Activated CD8-positive, alpha-beta T cell treated with anti-CD3 and anti-CD28 coated beads for 36 hours (primary cell): ENCODE measurements at regions of chr2 and their contacts with region 1.

Region 1: DNA sequence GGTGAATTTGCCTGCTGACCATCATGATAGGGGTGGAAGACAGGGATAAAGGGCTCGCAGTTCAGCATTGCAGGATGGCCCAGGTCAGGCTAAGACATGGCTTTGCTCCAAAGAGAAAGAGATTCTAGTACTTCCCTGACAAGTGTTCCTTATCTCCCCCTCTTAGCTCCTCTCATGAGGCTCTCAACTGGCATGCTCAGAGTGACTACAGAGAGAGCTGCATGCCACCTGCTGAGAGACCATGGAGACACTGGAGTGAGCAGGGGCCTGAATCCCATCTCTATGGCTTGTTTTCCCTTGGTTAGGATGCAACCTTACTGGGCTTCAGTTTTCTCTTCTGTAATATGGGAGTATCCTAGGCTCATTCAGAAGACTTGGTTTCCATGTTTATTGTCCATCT is 94.3 kb downstream of the ARHGAP15 start:
- DNase-seq: no peak
- ATAC-seq: no peak
- H3K4me3 Mint-ChIP-seq: no peak overlapping the region
- H3K27ac Mint-ChIP-seq: peak overlapping the region; percentile 59
- H3K4me1 Mint-ChIP-seq: peaks cover 51% of the 10 kb centered on the region
- H3K27me3 Mint-ChIP-seq: no peaks in the 10 kb centered on the region
- CTCF ChIP-seq: no peak

Region 2: DNA sequence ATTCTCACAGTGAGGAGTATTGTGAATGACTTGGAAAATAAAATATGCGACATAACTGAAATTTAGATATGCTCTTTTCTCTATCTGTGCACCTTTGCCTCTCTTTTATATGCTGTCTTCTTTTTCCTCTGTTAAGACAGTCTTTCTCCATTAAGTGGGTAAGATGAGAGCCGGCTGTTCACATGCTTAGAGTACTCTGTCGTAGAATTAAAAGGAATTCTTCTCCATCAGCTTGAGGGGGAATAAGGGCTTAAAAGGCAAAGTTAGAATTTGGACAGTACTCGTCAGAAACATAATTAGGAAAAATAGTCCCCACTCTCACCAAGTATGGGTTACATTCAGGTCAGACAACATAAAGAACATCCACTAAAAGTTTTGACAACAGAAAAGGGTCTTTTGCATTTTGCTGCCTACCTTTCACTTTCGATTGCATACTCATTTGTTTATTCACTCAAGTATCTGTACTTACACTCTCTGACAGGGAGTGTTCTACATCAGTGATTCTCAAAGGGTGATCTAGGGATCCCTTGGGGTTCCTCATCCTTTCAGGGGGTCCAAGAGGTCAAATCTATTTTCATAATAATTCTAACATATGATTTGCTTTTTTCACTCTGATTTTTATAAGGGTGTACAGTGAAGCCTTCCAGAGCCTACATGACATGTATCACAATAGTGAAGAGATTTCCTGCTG is 46.3 kb before region 1 on chr2:
- CTCF ChIA-PET with region 1: interaction called, 7 read pairs
- POLR2A ChIA-PET with region 1: interaction called, 3 read pairs
- intact Hi-C with region 1: loop called (anchors 5 kb)
- DNase-seq: no peak
- ATAC-seq: peak; percentile 67
- H3K4me3 Mint-ChIP-seq: peak overlapping the region; percentile 72
- H3K27ac Mint-ChIP-seq: peak overlapping the region; percentile 94
- H3K4me1 Mint-ChIP-seq: peaks cover 55% of the 10 kb centered on the region
- H3K27me3 Mint-ChIP-seq: no peaks in the 10 kb centered on the region
- CTCF ChIP-seq: no peak

Region 3: GRCh38 chr2:143205106-143205764 is 18.3 kb before region 1 on chr2:
- CTCF ChIA-PET with region 1: interaction called, 43 read pairs
- POLR2A ChIA-PET with region 1: no interaction called
- intact Hi-C with region 1: no loop called
- DNase-seq: no peak
- ATAC-seq: peak; percentile 77
- H3K4me3 Mint-ChIP-seq: no peak overlapping the region
- H3K27ac Mint-ChIP-seq: peak overlapping the region; percentile 64
- H3K4me1 Mint-ChIP-seq: peaks cover 50% of the 10 kb centered on the region
- H3K27me3 Mint-ChIP-seq: no peaks in the 10 kb centered on the region
- CTCF ChIP-seq: peak; percentile 45

Region 4: DNA sequence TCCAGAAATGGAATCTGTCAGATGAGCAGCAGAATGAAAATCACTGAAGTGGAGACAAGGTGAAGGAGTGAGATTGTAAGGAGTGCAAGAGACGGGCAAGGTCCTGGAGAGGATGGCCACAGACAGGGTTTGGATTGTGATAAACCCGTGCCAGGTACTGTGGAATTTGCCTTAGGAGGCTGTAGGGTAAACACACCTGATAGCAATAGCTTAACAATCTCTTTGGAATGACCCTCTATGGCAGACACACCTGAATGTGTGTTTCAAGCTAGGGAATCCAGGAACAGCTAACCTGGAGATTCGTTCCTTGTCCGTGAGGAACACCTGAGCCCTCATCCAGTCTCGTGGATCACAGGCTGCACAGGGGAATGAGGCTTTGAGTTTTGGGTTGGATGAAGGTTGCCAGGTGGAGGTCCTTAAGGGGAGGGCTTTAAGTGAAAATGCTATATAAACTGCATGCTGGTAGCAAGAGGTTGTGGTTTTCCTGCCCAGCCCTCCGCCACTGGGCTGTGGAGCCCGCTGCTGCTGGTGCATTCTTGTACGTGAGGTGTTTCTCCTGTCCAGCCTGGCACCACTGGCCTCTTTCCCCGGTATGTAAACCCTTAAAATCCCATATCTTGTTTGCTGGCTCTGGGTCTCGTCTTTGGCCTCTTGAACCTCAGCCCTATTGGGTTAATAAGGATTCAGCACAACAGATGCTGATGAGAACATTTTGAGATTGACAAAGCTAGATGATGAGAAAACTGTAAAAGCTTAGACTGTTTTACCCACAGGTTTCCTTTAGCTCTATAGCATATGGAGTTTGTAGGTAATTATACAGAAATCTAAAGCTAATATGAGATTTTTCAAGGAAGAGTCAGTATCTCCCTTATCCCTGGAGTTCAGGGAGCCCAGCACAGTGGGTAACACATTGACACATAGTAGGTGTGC is 23.5 kb after region 1 on chr2:
- CTCF ChIA-PET with region 1: interaction called, 11 read pairs
- POLR2A ChIA-PET with region 1: no interaction called
- intact Hi-C with region 1: no loop called
- DNase-seq: peak; percentile 50
- ATAC-seq: peak; percentile 64
- H3K4me3 Mint-ChIP-seq: peak overlapping the region; percentile 47
- H3K27ac Mint-ChIP-seq: no peak overlapping the region
- H3K4me1 Mint-ChIP-seq: peaks cover 24% of the 10 kb centered on the region
- H3K27me3 Mint-ChIP-seq: no peaks in the 10 kb centered on the region
- CTCF ChIP-seq: no peak

Region 5: DNA sequence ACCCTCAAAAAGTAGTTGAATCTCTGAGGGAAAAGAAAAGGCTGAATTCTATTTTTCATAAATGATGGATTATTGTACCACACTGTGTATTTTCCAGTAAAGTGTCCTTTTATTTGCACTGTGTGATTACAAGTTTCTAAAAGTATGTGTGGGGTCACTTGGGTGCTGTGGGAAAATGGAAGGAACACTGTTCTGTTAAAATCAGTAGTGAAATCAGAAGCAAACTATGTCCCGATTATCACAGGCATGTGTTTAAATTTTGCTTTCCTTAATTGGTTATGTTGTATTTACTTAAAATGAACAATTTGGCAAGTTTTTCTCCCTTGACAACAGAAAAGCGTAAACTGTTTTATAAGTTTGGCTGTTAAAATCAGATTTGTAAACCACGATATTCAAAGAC is 258.8 kb after region 1 on chr2:
- CTCF ChIA-PET with region 1: no interaction called
- POLR2A ChIA-PET with region 1: no interaction called
- intact Hi-C with region 1: no loop called
- DNase-seq: no peak
- ATAC-seq: no peak
- H3K4me3 Mint-ChIP-seq: no peak overlapping the region
- H3K27ac Mint-ChIP-seq: no peak overlapping the region
- H3K4me1 Mint-ChIP-seq: peaks cover 27% of the 10 kb centered on the region
- H3K27me3 Mint-ChIP-seq: no peaks in the 10 kb centered on the region
- CTCF ChIP-seq: no peak

Region 6: GRCh38 chr2:143505542-143505941 is 282.0 kb after region 1 on chr2:
- CTCF ChIA-PET with region 1: no interaction called
- POLR2A ChIA-PET with region 1: no interaction called
- intact Hi-C with region 1: no loop called
- DNase-seq: no peak
- ATAC-seq: no peak
- H3K4me3 Mint-ChIP-seq: no peak overlapping the region
- H3K27ac Mint-ChIP-seq: no peak overlapping the region
- H3K4me1 Mint-ChIP-seq: peaks cover 24% of the 10 kb centered on the region
- H3K27me3 Mint-ChIP-seq: no peaks in the 10 kb centered on the region
- CTCF ChIP-seq: no peak